Naive thymus-derived CD4-positive, alpha-beta T cell (primary cell): ENCODE measurements at regions of chr2 and their contacts with region 1.

Region 1: DNA sequence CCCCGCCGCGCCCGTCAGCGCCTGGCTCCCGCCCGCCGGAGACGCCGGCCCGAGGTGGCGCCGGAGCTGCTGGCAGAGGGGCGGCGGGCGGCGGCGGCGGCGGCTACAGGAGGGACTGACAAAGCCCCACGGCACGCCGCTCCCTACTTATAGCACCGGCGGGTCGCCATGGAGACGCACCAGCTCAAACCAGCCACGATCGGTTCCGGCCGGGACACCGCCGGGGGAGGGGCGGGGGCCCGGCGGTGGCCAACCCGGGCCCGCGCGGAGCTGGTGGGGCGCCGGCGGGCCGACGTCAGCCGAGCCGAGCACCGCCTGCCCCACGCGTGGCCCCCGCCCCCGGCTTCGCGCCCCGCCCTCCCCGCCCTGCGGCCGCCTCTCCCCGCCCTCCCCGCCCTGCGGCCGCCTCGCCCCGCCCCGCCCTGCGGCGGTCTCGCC is at the start of gene ODC1:
- DNase-seq: peak; percentile 96 to 99 (median 97)
- ATAC-seq: peak; percentile 92
- H3K4me3 ChIP-seq: peak within 1 kb of the TSS; percentile 91
- H3K4me3 Mint-ChIP-seq: peak within 1 kb of the TSS; percentile 81 to 95 (median 86)
- H3K27ac ChIP-seq: peak within 1 kb of the TSS; percentile 88
- H3K27ac Mint-ChIP-seq: peak within 1 kb of the TSS; percentile 76 to 94 (median 89)
- H3K4me1 ChIP-seq: peaks cover 12 to 26% of the 10 kb centered on the region in 2 donors
- H3K4me1 Mint-ChIP-seq: peaks cover 7 to 47% (median 24%) of the 10 kb centered on the region in 7 donors
- H3K27me3 ChIP-seq: no peaks in the 10 kb centered on the region
- H3K27me3 Mint-ChIP-seq: no peaks in the 10 kb centered on the region
- total RNA-seq, gene ODC1: 32.7 to 88.2 (median 52.4) TPM

Region 2: GRCh38 chr2:9843229-9844035 is 604.8 kb before region 1 on chr2 and contains the start of gene TAF1B:
- CTCF ChIA-PET with region 1: no interaction called
- POLR2A ChIA-PET with region 1: no interaction called
- intact Hi-C with region 1: loop called (anchors 1 to 2 kb)
- DNase-seq: peak; percentile 55 to 89 (median 80)
- ATAC-seq: peak; percentile 87
- H3K4me3 ChIP-seq: peak within 1 kb of the TSS; percentile 85
- H3K4me3 Mint-ChIP-seq: peak within 1 kb of the TSS; percentile 89 to 95 (median 93)
- H3K27ac ChIP-seq: peak within 1 kb of the TSS; percentile 72
- H3K27ac Mint-ChIP-seq: peak within 1 kb of the TSS; percentile 74 to 97 (median 92)
- H3K4me1 ChIP-seq: peaks cover 11 to 13% of the 10 kb centered on the region in 2 donors
- H3K4me1 Mint-ChIP-seq: peaks cover 25 to 56% (median 48%) of the 10 kb centered on the region in 7 donors
- H3K27me3 ChIP-seq: no peaks in the 10 kb centered on the region
- H3K27me3 Mint-ChIP-seq: peaks cover 0 to 6% (median 0%) of the 10 kb centered on the region in 5 donors
- total RNA-seq, gene TAF1B: 9.2 to 28.2 (median 20.9) TPM

Region 3: DNA sequence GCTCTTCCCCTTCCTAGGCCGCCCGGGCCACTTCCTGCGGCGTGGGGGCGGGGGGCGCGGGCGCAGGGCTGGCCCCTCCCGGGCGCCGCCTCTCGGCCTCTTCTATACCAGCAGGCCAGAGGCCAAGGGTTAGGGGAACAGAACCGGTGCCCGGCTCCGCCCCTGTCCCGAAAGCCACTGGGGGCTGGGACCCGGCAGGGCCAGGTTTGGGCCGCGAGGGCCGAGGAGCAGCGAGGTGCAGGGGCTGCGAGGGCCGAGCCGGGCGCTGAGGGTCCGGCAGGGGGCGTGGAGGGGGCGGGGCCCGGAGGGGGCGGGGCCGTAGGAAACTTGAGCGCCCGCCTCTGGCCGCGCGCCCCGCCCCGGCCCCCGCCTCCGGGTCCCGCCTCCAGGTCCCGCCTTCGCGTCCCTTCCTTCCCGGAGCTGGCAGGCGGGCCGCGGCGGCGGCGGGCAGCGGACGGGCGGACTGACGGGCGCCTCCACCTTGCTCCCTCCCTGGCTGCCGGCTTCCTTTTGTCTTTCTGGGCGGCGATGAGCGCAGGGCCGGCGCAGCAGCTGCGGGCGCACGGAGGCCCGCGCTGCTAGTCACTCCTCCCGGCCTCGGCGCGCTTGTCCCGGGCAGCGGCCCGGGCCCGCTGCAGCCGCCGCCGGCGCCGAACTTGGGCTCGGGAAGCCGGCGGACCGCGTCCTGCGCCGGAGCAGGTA is 145.6 kb before region 1 on chr2 and contains the start of gene HPCAL1:
- CTCF ChIA-PET with region 1: interaction called, 5 read pairs
- POLR2A ChIA-PET with region 1: interaction called, 21 read pairs
- intact Hi-C with region 1: loop called (anchors 1 kb)
- DNase-seq: peak; percentile 69 to 90 (median 84)
- ATAC-seq: peak; percentile 85
- H3K4me3 ChIP-seq: peak within 1 kb of the TSS; percentile 72
- H3K4me3 Mint-ChIP-seq: peak within 1 kb of the TSS; percentile 89 to 100 (median 99)
- H3K27ac ChIP-seq: peak within 1 kb of the TSS; percentile 78
- H3K27ac Mint-ChIP-seq: peak within 1 kb of the TSS; percentile 85 to 97 (median 94)
- H3K4me1 ChIP-seq: peaks cover 42 to 62% of the 10 kb centered on the region in 2 donors
- H3K4me1 Mint-ChIP-seq: peaks cover 46 to 77% (median 66%) of the 10 kb centered on the region in 7 donors
- H3K27me3 ChIP-seq: no peaks in the 10 kb centered on the region
- H3K27me3 Mint-ChIP-seq: no peaks in the 10 kb centered on the region
- total RNA-seq, gene HPCAL1: 44.9 to 90.5 (median 65.8) TPM

Region 4: GRCh38 chr2:10360851-10361588 is 87.2 kb before region 1 on chr2:
- CTCF ChIA-PET with region 1: no interaction called
- POLR2A ChIA-PET with region 1: no interaction called
- intact Hi-C with region 1: no loop called
- DNase-seq: no peak
- ATAC-seq: no peak
- H3K4me3 ChIP-seq: no peak overlapping the region
- H3K4me3 Mint-ChIP-seq: peak overlapping the region in 1 of 10 donors; percentile 17
- H3K27ac ChIP-seq: no peak overlapping the region
- H3K27ac Mint-ChIP-seq: peak overlapping the region in 6 of 9 donors; percentile 5 to 77 (median 57)
- H3K4me1 ChIP-seq: peaks cover 2 to 12% of the 10 kb centered on the region in 2 donors
- H3K4me1 Mint-ChIP-seq: peaks cover 6 to 69% (median 57%) of the 10 kb centered on the region in 7 donors
- H3K27me3 ChIP-seq: no peaks in the 10 kb centered on the region
- H3K27me3 Mint-ChIP-seq: no peaks in the 10 kb centered on the region

Region 5: GRCh38 chr2:10466801-10467200 is 18.6 kb after region 1 on chr2:
- CTCF ChIA-PET with region 1: no interaction called
- POLR2A ChIA-PET with region 1: no interaction called
- intact Hi-C with region 1: no loop called
- DNase-seq: no peak
- ATAC-seq: no peak
- H3K4me3 ChIP-seq: no peak overlapping the region
- H3K4me3 Mint-ChIP-seq: no peak overlapping the region
- H3K27ac ChIP-seq: no peak overlapping the region
- H3K27ac Mint-ChIP-seq: no peak overlapping the region
- H3K4me1 ChIP-seq: no peaks in the 10 kb centered on the region
- H3K4me1 Mint-ChIP-seq: no peaks in the 10 kb centered on the region
- H3K27me3 ChIP-seq: no peaks in the 10 kb centered on the region
- H3K27me3 Mint-ChIP-seq: peaks cover 0 to 9% (median 4%) of the 10 kb centered on the region in 5 donors

Region 6: GRCh38 chr2:10493636-10494281 is 45.5 kb after region 1 on chr2:
- CTCF ChIA-PET with region 1: no interaction called
- POLR2A ChIA-PET with region 1: interaction called, 9 read pairs
- intact Hi-C with region 1: loop called in 1 of 2 experiments (anchors 2 kb)
- DNase-seq: peak; percentile 18 to 66 (median 49)
- ATAC-seq: peak; percentile 94
- H3K4me3 ChIP-seq: no peak overlapping the region
- H3K4me3 Mint-ChIP-seq: peak overlapping the region in 2 of 10 donors; percentile 4 to 20
- H3K27ac ChIP-seq: no peak overlapping the region
- H3K27ac Mint-ChIP-seq: peak overlapping the region in 1 of 9 donors; percentile 14
- H3K4me1 ChIP-seq: peaks cover 6 to 20% of the 10 kb centered on the region in 2 donors
- H3K4me1 Mint-ChIP-seq: peaks cover 0 to 12% (median 0%) of the 10 kb centered on the region in 7 donors
- H3K27me3 ChIP-seq: no peaks in the 10 kb centered on the region
- H3K27me3 Mint-ChIP-seq: peaks cover 5 to 25% (median 15%) of the 10 kb centered on the region in 5 donors

Region 7: GRCh38 chr2:10668402-10669012 is 220.3 kb after region 1 on chr2:
- CTCF ChIA-PET with region 1: no interaction called
- POLR2A ChIA-PET with region 1: no interaction called
- intact Hi-C with region 1: loop called (anchors 1 kb)
- DNase-seq: peak in 7 of 9 donors; percentile 39 to 63 (median 56)
- ATAC-seq: peak; percentile 71
- H3K4me3 ChIP-seq: no peak overlapping the region
- H3K4me3 Mint-ChIP-seq: no peak overlapping the region
- H3K27ac ChIP-seq: no peak overlapping the region
- H3K27ac Mint-ChIP-seq: no peak overlapping the region
- H3K4me1 ChIP-seq: no peaks in the 10 kb centered on the region
- H3K4me1 Mint-ChIP-seq: peaks cover 0 to 6% (median 0%) of the 10 kb centered on the region in 7 donors
- H3K27me3 ChIP-seq: no peaks in the 10 kb centered on the region
- H3K27me3 Mint-ChIP-seq: no peaks in the 10 kb centered on the region